ENCODE measurements at regions of chr7 and their contacts with region 1.

Region 1: GRCh38 chr7:45923290-45923689 is 2.2 kb upstream of the IGFBP3 start:
- DNase-seq: peak; percentile 73
- H3K4me3 ChIP-seq: peak overlapping the region in 1 of 3 experiments; percentile 52
- H3K27ac ChIP-seq: no peak overlapping the region
- H3K4me1 ChIP-seq: peaks cover 28% of the 10 kb centered on the region
- H3K27me3 ChIP-seq: peaks cover 31 to 51% of the 10 kb centered on the region in 2 experiments
- CTCF ChIP-seq: peak; percentile 88 to 89
- POLR2A ChIP-seq: no peak

Region 2: GRCh38 chr7:45890902-45891461 is 32.3 kb before region 1 on chr7:
- CTCF ChIA-PET with region 1: interaction called, 100 read pairs
- POLR2A ChIA-PET with region 1: no interaction called
- dilution Hi-C with region 1: no loop called
- intact Hi-C with region 1: loop called (anchors 1 kb)
- DNase-seq: peak; percentile 62
- H3K4me3 ChIP-seq: no peak overlapping the region
- H3K27ac ChIP-seq: peak overlapping the region; percentile 30
- H3K4me1 ChIP-seq: peaks cover 46% of the 10 kb centered on the region
- H3K27me3 ChIP-seq: peaks cover 0 to 1% of the 10 kb centered on the region in 2 experiments
- CTCF ChIP-seq: peak; percentile 20 to 40
- POLR2A ChIP-seq: no peak

Region 3: GRCh38 chr7:46129831-46130230 is 206.5 kb after region 1 on chr7:
- CTCF ChIA-PET with region 1: no interaction called
- POLR2A ChIA-PET with region 1: no interaction called
- dilution Hi-C with region 1: no loop called
- intact Hi-C with region 1: loop called (anchors 10 kb)
- DNase-seq: no peak
- H3K4me3 ChIP-seq: no peak overlapping the region
- H3K27ac ChIP-seq: no peak overlapping the region
- H3K4me1 ChIP-seq: no peaks in the 10 kb centered on the region
- H3K27me3 ChIP-seq: peaks cover 0 to 4% of the 10 kb centered on the region in 2 experiments
- CTCF ChIP-seq: peak in 1 of 2 donors; percentile 24
- POLR2A ChIP-seq: no peak

Region 4: DNA sequence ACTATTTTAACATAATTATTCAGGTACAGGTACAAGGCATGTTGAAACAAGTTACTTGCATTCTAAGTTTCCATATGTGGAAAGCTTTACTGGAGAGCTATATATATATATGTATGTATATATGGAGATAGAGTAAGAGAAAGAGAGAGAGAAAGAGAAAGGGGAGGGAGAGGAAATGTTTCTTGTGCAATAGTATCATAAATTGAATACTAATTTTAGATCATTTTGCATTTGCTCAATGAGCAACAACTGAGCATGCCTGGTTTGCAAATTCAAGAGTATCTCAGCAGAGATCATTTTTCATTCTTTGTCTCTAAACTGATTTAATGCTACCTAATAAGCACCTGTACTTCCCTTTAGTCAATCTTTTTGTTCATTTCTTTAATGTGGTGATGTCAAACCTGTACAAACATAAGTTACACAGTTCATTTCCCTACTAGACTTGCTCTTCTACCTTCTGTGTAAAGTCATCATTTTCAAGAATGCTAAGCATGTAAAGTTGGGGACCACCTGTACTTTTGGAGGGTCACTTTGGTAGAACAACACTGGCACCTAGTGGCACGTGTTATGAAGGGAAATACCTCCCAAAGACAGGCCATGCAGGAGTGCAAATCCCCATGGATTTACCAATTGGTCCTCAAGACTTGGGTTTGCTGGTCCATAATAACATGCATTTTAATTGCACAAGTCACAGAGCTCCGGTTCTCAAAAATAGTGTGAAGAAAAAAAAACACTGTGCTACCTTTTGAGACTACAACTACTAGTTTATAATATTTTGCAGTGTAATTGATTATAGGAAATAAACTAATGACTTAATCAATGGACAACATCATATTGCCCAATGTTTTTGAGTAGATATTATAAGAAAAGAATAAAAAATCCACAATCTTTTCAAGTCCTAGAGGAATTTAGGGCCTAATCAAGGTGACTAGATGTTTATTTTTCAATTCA is 429.0 kb after region 1 on chr7:
- CTCF ChIA-PET with region 1: interaction called, 57 read pairs
- POLR2A ChIA-PET with region 1: no interaction called
- dilution Hi-C with region 1: no loop called
- intact Hi-C with region 1: loop called (anchors 1 kb)
- DNase-seq: peak; percentile 65
- H3K4me3 ChIP-seq: no peak overlapping the region
- H3K27ac ChIP-seq: no peak overlapping the region
- H3K4me1 ChIP-seq: no peaks in the 10 kb centered on the region
- H3K27me3 ChIP-seq: peaks cover 0 to 2% of the 10 kb centered on the region in 2 experiments
- CTCF ChIP-seq: peak; percentile 37 to 53
- POLR2A ChIP-seq: no peak

Region 5: DNA sequence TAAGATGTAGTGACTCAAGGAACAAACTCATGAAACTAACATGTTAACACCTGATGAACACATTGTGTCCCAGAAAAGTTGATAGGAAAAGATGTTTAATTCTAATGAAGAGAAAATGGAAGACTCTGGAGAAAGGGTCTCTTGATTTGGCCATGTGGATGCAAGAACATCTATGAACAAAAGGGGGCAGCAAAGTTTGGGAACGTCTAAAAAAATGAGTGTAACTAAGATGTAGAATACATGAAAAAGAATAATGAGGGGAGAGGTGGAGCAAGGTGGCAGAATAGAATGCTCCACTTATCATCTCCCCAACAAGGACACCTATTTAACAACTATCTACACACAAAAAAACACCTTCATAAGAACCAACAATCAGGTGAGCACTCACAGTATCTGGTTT is 853.5 kb after region 1 on chr7:
- CTCF ChIA-PET with region 1: interaction called, 4 read pairs
- POLR2A ChIA-PET with region 1: no interaction called
- dilution Hi-C with region 1: no loop called
- intact Hi-C with region 1: loop called (anchors 2 kb)
- DNase-seq: peak; percentile 51
- H3K4me3 ChIP-seq: no peak overlapping the region
- H3K27ac ChIP-seq: no peak overlapping the region
- H3K4me1 ChIP-seq: no peaks in the 10 kb centered on the region
- H3K27me3 ChIP-seq: no peaks in the 10 kb centered on the region
- CTCF ChIP-seq: peak; percentile 43
- POLR2A ChIP-seq: no peak

Region 6: GRCh38 chr7:47088329-47089067 is 1165.2 kb after region 1 on chr7:
- CTCF ChIA-PET with region 1: interaction called, 65 read pairs
- POLR2A ChIA-PET with region 1: no interaction called
- dilution Hi-C with region 1: no loop called
- intact Hi-C with region 1: loop called (anchors 1 kb)
- DNase-seq: peak; percentile 65
- H3K4me3 ChIP-seq: no peak overlapping the region
- H3K27ac ChIP-seq: no peak overlapping the region
- H3K4me1 ChIP-seq: no peaks in the 10 kb centered on the region
- H3K27me3 ChIP-seq: no peaks in the 10 kb centered on the region
- CTCF ChIP-seq: peak; percentile 74 to 75
- POLR2A ChIP-seq: no peak

Region 7: GRCh38 chr7:47179812-47180515 is 1256.7 kb after region 1 on chr7:
- CTCF ChIA-PET with region 1: interaction called, 149 read pairs
- POLR2A ChIA-PET with region 1: no interaction called
- dilution Hi-C with region 1: no loop called
- intact Hi-C with region 1: loop called (anchors 1 kb)
- DNase-seq: peak; percentile 51
- H3K4me3 ChIP-seq: no peak overlapping the region
- H3K27ac ChIP-seq: no peak overlapping the region
- H3K4me1 ChIP-seq: no peaks in the 10 kb centered on the region
- H3K27me3 ChIP-seq: peaks cover 0 to 2% of the 10 kb centered on the region in 2 experiments
- CTCF ChIP-seq: peak; percentile 69 to 74
- POLR2A ChIP-seq: no peak

Measured in endothelial cell of umbilical vein (primary cell).